Aorta (tissue), 5 donors: ENCODE measurements at regions of chr15 and their contacts with region 1.

Region 1: GRCh38 chr15:31254431-31255175 is 72.0 kb upstream of the KLF13 start:
- DNase-seq: peak in 1 of 2 donors; percentile 70
- ATAC-seq: no peak
- H3K4me3 ChIP-seq: no peak overlapping the region
- H3K27ac ChIP-seq: no peak overlapping the region
- H3K4me1 ChIP-seq: peaks cover 3 to 6% of the 10 kb centered on the region in 2 donors
- H3K27me3 ChIP-seq: no peaks in the 10 kb centered on the region

Region 2: GRCh38 chr15:31311735-31312619 is 57.4 kb after region 1 on chr15:
- intact Hi-C with region 1: loop called in 1 of 2 experiments (anchors 10 kb)
- DNase-seq: no peak
- ATAC-seq: no peak
- H3K4me3 ChIP-seq: no peak overlapping the region
- H3K27ac ChIP-seq: no peak overlapping the region
- H3K4me1 ChIP-seq: no peaks in the 10 kb centered on the region
- H3K27me3 ChIP-seq: no peaks in the 10 kb centered on the region